ENCODE measurements at regions of chr1 and their contacts with region 1.

Region 1: GRCh38 chr1:21268281-21269239 is 21.7 kb downstream of the ECE1 start:
- DNase-seq: peak in 3 of 5 donors; percentile 31 to 57 (median 47)
- H3K4me3 ChIP-seq: no peak overlapping the region
- H3K27ac ChIP-seq: peak overlapping the region in 1 of 2 donors; percentile 12
- H3K4me1 ChIP-seq: peaks cover 19% of the 10 kb centered on the region
- H3K27me3 ChIP-seq: no peaks in the 10 kb centered on the region
- CTCF ChIP-seq: no peak
- EP300 ChIP-seq: no peak
- POLR2A ChIP-seq: no peak

Region 2: DNA sequence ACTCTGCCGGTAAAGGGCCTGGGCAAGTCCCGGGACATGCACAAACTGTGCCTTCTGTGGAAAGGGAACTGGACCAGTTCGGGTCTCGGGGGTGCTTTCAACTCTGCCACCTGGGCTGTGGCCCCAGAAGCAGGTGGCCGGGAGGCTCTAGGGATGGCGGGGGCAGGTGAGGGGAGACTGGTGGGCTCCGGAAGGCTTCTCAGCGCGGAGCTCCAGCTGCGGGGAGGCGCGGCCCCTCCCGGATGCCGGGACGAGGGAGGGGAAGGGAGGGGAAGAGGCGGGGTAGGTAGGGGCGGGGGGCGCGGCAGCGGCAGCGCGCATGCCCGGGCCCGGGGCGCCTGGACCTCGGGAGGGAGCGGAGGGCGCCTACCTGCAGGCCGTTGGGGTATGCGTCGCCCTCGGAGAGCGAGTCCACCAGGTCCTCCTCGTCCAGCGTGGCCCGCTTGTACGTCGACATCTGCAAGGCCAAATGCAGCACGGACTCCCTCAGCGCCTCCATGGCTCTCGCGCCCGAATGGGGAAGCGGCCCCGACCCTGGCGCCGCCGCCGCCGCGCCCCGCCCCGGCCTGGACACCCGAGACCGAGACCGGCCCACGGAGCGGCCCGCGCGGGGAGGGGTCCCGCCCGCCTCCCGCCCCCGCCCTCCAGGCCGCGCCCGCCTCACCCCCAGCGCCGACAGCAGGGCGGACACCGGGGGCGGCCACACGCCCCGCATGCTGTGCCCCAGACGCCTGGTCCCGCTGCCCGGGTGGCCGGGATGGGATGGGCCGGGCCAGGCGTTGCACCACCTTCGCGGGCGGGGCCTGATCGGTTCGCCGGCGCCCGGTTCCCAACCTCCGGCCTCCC is 21.4 kb after region 1 on chr1 and contains the start of gene ECE1:
- intact Hi-C with region 1: no loop called
- DNase-seq: peak in 3 of 5 donors; percentile 53 to 73 (median 72)
- H3K4me3 ChIP-seq: peak within 1 kb of the TSS; percentile 52
- H3K27ac ChIP-seq: peak within 1 kb of the TSS; percentile 76 to 78
- H3K4me1 ChIP-seq: peaks cover 13% of the 10 kb centered on the region
- H3K27me3 ChIP-seq: no peaks in the 10 kb centered on the region
- CTCF ChIP-seq: no peak
- EP300 ChIP-seq: no peak
- POLR2A ChIP-seq: no peak
- total RNA-seq, gene ECE1: 37.3 to 183 (median 119) TPM

Region 3: DNA sequence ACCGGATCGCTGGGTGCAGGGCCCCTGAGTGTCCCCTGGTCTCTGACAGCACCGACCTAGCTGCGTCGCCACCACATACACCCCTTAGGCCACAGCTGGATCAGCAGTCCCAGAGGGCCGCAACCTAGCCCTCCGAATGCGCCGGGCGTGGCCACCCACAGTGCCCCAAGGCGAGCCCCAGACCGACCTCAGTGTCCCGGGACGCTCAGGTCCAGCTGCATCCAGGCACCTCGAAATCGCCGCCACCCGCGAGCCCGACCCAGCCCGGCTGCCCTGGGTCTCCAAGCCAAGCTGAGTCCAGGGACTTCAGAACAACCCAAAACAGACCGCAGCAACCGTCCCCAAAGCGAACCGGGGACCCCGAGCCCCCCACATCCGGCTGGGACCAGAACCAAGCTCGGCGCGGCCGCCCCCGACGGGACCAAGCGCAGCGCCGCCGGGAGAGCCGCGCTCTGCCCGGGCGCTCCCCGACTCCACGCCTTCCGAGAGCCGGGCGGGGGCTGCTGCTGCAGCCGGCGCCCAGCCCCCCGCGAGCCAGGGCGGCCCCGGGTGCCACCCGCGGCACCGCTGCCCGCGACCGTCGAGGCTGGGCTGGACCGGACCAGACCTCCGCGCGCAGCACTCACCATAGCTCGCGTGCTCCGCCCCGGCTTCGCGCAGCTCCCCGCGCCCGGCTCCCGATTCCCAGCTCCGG is 76.3 kb after region 1 on chr1:
- intact Hi-C with region 1: loop called in 1 of 4 experiments (anchors 5 kb)
- DNase-seq: peak in 3 of 5 donors; percentile 58 to 68 (median 64)
- H3K4me3 ChIP-seq: peak overlapping the region; percentile 64
- H3K27ac ChIP-seq: peak overlapping the region; percentile 81 to 92
- H3K4me1 ChIP-seq: peaks cover 17% of the 10 kb centered on the region
- H3K27me3 ChIP-seq: no peaks in the 10 kb centered on the region
- CTCF ChIP-seq: no peak
- EP300 ChIP-seq: no peak
- POLR2A ChIP-seq: no peak